Right cardiac atrium (tissue), 5 donors: ENCODE measurements at regions of chr3 and their contacts with region 1.

Region 1: DNA sequence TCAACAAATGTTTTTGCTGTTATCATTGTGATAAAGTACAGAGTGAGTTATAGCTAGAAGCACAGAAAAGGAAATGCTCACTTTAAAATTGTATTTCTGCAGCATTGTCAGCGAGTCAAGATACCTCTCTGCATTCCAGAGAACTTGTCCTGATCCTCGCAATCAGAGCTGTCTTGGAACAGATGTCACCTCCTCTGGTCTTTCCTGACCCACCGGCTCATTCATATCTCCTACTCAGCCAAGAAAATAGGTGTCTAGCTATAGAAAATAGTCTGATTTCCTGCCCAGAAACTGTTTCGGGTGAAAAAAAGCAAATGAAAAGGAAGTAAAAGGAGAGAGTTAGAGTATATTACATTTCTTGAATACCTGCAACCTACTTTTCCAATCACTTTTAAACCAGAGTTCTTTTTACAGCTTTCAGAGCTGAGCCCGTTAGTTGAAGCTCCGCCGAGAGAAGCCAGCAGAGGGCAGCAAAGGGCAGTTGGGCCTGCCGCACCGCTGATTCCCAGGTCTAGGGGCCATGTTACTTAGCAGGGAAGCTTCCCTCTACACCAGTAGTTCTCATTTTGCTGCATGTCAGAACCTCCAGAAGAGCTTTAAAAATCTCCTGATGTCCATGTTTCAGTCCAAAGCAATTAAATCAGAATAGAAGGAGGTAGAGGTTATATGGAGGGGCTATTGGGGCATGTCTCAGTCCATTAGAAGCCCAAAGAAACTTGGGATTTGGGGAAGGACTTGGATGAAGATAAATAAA is 185.7 kb upstream of the THRB start:
- DNase-seq: peak; percentile 62 to 83 (median 76)
- ATAC-seq: peak; percentile 80 to 82
- H3K4me3 ChIP-seq: no peak overlapping the region
- H3K27ac ChIP-seq: no peak overlapping the region
- H3K4me1 ChIP-seq: no peaks in the 10 kb centered on the region
- H3K27me3 ChIP-seq: no peaks in the 10 kb centered on the region

Region 2: GRCh38 chr3:23999012-23999641 is 681.3 kb before region 1 on chr3:
- intact Hi-C with region 1: loop called (anchors 5 to 10 kb)
- DNase-seq: peak; percentile 54 to 87 (median 79)
- ATAC-seq: no peak
- H3K4me3 ChIP-seq: no peak overlapping the region
- H3K27ac ChIP-seq: no peak overlapping the region
- H3K4me1 ChIP-seq: peaks cover 2% of the 10 kb centered on the region
- H3K27me3 ChIP-seq: no peaks in the 10 kb centered on the region

Region 3: GRCh38 chr3:24004171-24004938 is 676.0 kb before region 1 on chr3:
- intact Hi-C with region 1: loop called (anchors 5 to 10 kb)
- DNase-seq: no peak
- ATAC-seq: no peak
- H3K4me3 ChIP-seq: no peak overlapping the region
- H3K27ac ChIP-seq: no peak overlapping the region
- H3K4me1 ChIP-seq: no peaks in the 10 kb centered on the region
- H3K27me3 ChIP-seq: no peaks in the 10 kb centered on the region